ENCODE measurements at regions of chr1 and their contacts with region 1.

Region 1: GRCh38 chr1:32400876-32401631 is 6.8 kb upstream of the BSDC1 start:
- DNase-seq: peak; percentile 87
- H3K4me3 Mint-ChIP-seq: no peak overlapping the region
- H3K27ac Mint-ChIP-seq: no peak overlapping the region
- H3K4me1 Mint-ChIP-seq: no peaks in the 10 kb centered on the region
- H3K27me3 Mint-ChIP-seq: no peaks in the 10 kb centered on the region
- CTCF ChIP-seq: peak; percentile 88

Region 2: GRCh38 chr1:32413507-32414185 is 12.6 kb after region 1 on chr1:
- CTCF ChIA-PET with region 1: interaction called, 6 read pairs
- intact Hi-C with region 1: loop called (anchors 2 kb)
- DNase-seq: peak; percentile 66
- H3K4me3 Mint-ChIP-seq: no peak overlapping the region
- H3K27ac Mint-ChIP-seq: no peak overlapping the region
- H3K4me1 Mint-ChIP-seq: peaks cover 7% of the 10 kb centered on the region
- H3K27me3 Mint-ChIP-seq: peaks cover 17% of the 10 kb centered on the region
- CTCF ChIP-seq: peak; percentile 68

Region 3: GRCh38 chr1:32786856-32787255 is 385.8 kb after region 1 on chr1:
- CTCF ChIA-PET with region 1: no interaction called
- intact Hi-C with region 1: loop called (anchors 5 kb)
- DNase-seq: no peak
- H3K4me3 Mint-ChIP-seq: no peak overlapping the region
- H3K27ac Mint-ChIP-seq: no peak overlapping the region
- H3K4me1 Mint-ChIP-seq: peaks cover 6% of the 10 kb centered on the region
- H3K27me3 Mint-ChIP-seq: no peaks in the 10 kb centered on the region
- CTCF ChIP-seq: peak; percentile 22

Region 4: DNA sequence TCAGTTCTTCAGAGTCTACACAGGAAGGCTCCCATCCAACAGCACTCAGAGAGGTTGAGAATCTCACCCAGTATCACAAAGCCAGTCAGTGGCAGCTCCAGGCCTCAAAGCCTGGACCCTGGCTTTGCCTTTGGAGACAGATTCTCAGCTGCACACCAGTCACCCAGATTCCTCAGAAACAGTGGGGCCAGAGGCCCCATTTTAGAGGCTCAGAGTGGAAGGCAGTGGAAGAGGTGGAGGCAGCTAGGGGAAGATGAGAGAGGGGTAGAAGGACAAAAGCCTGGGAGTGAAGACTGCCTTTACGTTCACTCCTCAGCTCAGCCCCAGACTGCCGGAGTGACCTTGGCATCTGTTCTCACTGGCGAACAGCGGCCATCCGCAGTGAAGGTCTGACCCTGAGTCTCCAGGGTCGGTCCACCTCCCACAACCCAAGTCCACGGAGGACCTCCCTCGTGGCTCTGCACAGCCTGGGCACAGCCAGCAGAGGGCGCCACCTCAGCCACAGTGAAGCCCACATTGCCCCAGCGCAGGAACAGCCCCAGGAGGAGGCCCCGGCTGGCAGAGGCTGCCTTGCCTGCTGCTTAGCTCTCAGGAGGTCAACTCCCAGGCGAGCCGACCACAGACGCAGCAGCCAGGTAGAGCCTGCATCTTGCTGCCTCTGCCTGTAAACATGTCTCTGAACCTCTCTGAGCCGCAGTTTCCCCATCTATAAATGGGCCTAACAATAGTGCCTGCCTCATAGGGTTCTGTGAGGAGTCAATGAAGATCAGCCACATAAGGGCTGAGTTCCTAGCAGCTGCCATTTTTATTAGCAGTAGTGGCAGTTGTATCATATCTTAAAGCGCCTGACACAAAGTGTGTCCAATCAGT is 475.5 kb after region 1 on chr1:
- CTCF ChIA-PET with region 1: no interaction called
- intact Hi-C with region 1: loop called (anchors 10 kb)
- DNase-seq: peak; percentile 73
- H3K4me3 Mint-ChIP-seq: no peak overlapping the region
- H3K27ac Mint-ChIP-seq: no peak overlapping the region
- H3K4me1 Mint-ChIP-seq: peaks cover 31% of the 10 kb centered on the region
- H3K27me3 Mint-ChIP-seq: peaks cover 52% of the 10 kb centered on the region
- CTCF ChIP-seq: peak; percentile 87

Measured in Calu3 (cell line).